Caco-2 (cell line): ENCODE measurements at regions of chr16 and their contacts with region 1.

Region 1: GRCh38 chr16:69443927-69444631 is 19.7 kb downstream of the CYB5B start:
- DNase-seq: no peak
- H3K4me3 ChIP-seq: no peak overlapping the region
- H3K4me3 Mint-ChIP-seq: no peak overlapping the region
- H3K27ac Mint-ChIP-seq: peak overlapping the region; percentile 42
- H3K4me1 ChIP-seq: peaks cover 10% of the 10 kb centered on the region; the same call in 1 of the 2 replicates
- H3K4me1 Mint-ChIP-seq: peaks cover 15% of the 10 kb centered on the region
- H3K27me3 ChIP-seq: no peaks in the 10 kb centered on the region
- H3K27me3 Mint-ChIP-seq: no peaks in the 10 kb centered on the region
- CTCF ChIP-seq: no peak

Region 2: GRCh38 chr16:69424053-69424934 is 19.8 kb before region 1 on chr16 and contains the start of gene CYB5B:
- CTCF ChIA-PET with region 1: no interaction called
- POLR2A ChIA-PET with region 1: interaction called, 3 read pairs
- intact Hi-C with region 1: loop called (anchors 1 kb)
- DNase-seq: peak; percentile 98 to 99
- H3K4me3 ChIP-seq: peak within 1 kb of the TSS; percentile 96
- H3K4me3 Mint-ChIP-seq: peak within 1 kb of the TSS; percentile 91
- H3K27ac Mint-ChIP-seq: peak within 1 kb of the TSS; percentile 93
- H3K4me1 ChIP-seq: peaks cover 14% of the 10 kb centered on the region
- H3K4me1 Mint-ChIP-seq: peaks cover 12% of the 10 kb centered on the region
- H3K27me3 ChIP-seq: no peaks in the 10 kb centered on the region
- H3K27me3 Mint-ChIP-seq: no peaks in the 10 kb centered on the region
- CTCF ChIP-seq: no peak
- total RNA-seq, gene CYB5B: 355 TPM in 2 replicates

Region 3: GRCh38 chr16:69568676-69569075 is 124.6 kb after region 1 on chr16:
- CTCF ChIA-PET with region 1: no interaction called
- POLR2A ChIA-PET with region 1: no interaction called
- intact Hi-C with region 1: no loop called
- DNase-seq: no peak
- H3K4me3 ChIP-seq: no peak overlapping the region
- H3K4me3 Mint-ChIP-seq: peak overlapping the region; percentile 98
- H3K27ac Mint-ChIP-seq: no peak overlapping the region
- H3K4me1 ChIP-seq: peaks cover 21% of the 10 kb centered on the region
- H3K4me1 Mint-ChIP-seq: peaks cover 9% of the 10 kb centered on the region
- H3K27me3 ChIP-seq: no peaks in the 10 kb centered on the region
- H3K27me3 Mint-ChIP-seq: no peaks in the 10 kb centered on the region
- CTCF ChIP-seq: no peak

Region 4: DNA sequence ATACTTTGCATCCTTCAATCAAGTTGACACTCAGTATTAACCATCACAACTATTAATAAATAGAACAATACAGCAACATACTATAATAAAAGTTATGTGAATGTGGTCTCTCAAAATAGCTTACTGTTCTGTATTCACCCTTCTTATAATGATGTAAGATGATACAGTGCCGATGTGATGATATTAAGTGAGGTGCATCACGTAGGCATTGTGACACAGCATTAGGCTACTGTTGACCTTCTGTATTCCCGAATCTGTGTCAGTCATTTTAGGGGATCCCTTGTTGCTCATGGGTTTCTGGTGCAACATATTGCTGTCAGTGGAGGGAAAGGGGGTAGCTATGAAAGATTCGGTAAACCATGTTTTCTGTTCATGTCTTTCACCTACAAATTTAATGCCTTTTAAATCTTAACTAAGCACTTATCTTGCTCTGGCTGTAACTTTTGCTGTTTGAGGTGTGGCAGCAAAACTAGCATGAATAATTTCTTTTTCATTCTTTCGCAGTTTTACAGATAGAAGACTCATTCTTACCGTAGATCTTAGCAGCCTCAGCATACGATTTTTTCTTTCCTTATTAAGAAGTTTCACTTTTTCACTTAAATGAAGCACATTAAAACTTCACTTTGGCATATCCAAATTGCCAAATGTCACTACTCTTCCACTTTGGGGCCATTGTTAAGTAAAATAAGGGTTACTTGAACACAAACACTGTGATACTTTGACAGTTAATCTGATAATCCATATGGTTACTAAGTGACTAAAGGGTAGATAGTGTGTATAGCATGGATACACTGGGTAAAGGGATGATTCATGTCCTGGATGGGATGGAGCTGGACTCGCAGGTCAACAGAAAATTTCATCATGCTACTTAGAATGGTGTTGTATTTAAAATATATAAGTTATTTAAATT is 151.3 kb after region 1 on chr16:
- CTCF ChIA-PET with region 1: no interaction called
- POLR2A ChIA-PET with region 1: interaction called, 10 read pairs
- intact Hi-C with region 1: no loop called
- DNase-seq: no peak
- H3K4me3 ChIP-seq: no peak overlapping the region
- H3K4me3 Mint-ChIP-seq: peak overlapping the region; percentile 18
- H3K27ac Mint-ChIP-seq: no peak overlapping the region
- H3K4me1 ChIP-seq: peaks cover 43% of the 10 kb centered on the region
- H3K4me1 Mint-ChIP-seq: peaks cover 35% of the 10 kb centered on the region
- H3K27me3 ChIP-seq: no peaks in the 10 kb centered on the region
- H3K27me3 Mint-ChIP-seq: no peaks in the 10 kb centered on the region
- CTCF ChIP-seq: no peak